Calu3 (cell line): ENCODE measurements at regions of chr22 and their contacts with region 1.

Region 1: DNA sequence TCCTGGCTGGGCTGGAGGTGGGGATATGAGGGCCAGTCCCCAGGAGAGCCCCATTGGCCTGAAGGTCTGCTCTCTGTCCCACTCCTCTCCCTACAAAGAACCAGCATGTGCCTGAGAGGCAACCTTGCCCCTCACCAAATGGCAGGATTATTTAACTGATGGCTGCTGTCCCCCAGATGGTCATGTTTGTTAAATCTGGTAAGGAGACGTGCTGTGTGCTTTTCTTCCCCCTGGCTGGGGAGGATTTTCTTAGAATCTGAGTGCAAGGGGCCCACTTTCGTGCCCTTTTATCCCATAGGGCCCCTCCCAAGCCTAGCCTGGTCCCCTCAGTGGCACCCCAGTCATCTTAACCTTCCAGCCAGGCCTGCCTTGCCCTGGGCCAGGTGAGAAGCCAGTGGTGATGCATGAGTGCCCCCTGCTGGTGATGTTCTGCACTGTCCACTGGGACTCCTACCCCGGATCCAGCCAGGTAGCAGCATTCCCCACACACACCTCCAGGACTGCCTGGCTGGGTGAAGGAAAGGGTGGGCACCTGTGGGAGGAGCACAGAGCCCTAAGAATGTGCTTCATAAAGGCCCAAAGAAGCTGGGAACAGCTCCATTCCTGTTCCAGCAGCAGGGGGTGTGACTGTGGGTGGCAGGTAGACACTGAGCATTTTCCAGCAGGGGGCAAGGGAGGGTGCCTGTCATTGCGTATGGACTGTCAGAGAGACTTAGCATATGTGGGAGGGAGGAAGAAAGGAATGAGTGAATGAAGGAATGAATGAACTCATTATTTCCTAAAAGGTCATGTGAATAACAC is 28.9 kb downstream of the MFNG start:
- DNase-seq: peak; percentile 95
- H3K4me3 Mint-ChIP-seq: no peak overlapping the region
- H3K27ac Mint-ChIP-seq: no peak overlapping the region
- H3K4me1 Mint-ChIP-seq: peaks cover 58% of the 10 kb centered on the region
- H3K27me3 Mint-ChIP-seq: no peaks in the 10 kb centered on the region
- CTCF ChIP-seq: peak; percentile 96

Region 2: DNA sequence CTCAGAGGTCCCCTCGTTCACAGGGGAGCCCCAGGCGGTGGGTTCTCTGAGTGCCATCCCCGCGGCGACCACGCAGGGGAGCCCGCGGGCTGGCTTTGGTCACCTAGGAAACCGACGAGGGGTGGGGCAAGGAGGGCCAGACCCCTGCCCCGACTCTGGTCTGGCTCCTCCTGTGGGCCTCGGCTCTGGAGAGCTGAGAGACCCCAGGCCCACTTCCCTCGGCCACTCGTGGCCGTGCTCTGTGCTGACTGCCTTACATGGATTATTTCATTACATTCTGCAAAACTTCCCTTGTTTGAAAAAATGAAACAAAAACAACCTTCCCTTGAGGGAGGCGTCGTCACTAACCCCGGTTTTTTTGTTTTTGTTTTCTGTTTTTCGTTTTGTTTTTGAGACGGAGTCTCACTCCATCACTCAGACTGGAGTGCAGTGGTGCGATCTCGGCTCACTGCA is 190.1 kb before region 1 on chr22:
- CTCF ChIA-PET with region 1: interaction called, 3 read pairs
- intact Hi-C with region 1: loop called (anchors 5 kb)
- DNase-seq: peak; percentile 80
- H3K4me3 Mint-ChIP-seq: peak overlapping the region; percentile 70
- H3K27ac Mint-ChIP-seq: peak overlapping the region; percentile 81
- H3K4me1 Mint-ChIP-seq: peaks cover 17% of the 10 kb centered on the region
- H3K27me3 Mint-ChIP-seq: peaks cover 37% of the 10 kb centered on the region
- CTCF ChIP-seq: peak; percentile 96

Region 3: GRCh38 chr22:37316875-37317371 is 140.4 kb before region 1 on chr22:
- CTCF ChIA-PET with region 1: interaction called, 63 read pairs
- intact Hi-C with region 1: loop called (anchors 1 kb)
- DNase-seq: peak; percentile 92
- H3K4me3 Mint-ChIP-seq: no peak overlapping the region
- H3K27ac Mint-ChIP-seq: no peak overlapping the region
- H3K4me1 Mint-ChIP-seq: peaks cover 50% of the 10 kb centered on the region
- H3K27me3 Mint-ChIP-seq: no peaks in the 10 kb centered on the region
- CTCF ChIP-seq: peak; percentile 95

Region 4: GRCh38 chr22:37428649-37429586 is 28.4 kb before region 1 on chr22:
- CTCF ChIA-PET with region 1: interaction called, 11 read pairs
- intact Hi-C with region 1: loop called (anchors 1 kb)
- DNase-seq: peak; percentile 65
- H3K4me3 Mint-ChIP-seq: no peak overlapping the region
- H3K27ac Mint-ChIP-seq: no peak overlapping the region
- H3K4me1 Mint-ChIP-seq: peaks cover 35% of the 10 kb centered on the region
- H3K27me3 Mint-ChIP-seq: peaks cover 51% of the 10 kb centered on the region
- CTCF ChIP-seq: peak; percentile 92

Region 5: DNA sequence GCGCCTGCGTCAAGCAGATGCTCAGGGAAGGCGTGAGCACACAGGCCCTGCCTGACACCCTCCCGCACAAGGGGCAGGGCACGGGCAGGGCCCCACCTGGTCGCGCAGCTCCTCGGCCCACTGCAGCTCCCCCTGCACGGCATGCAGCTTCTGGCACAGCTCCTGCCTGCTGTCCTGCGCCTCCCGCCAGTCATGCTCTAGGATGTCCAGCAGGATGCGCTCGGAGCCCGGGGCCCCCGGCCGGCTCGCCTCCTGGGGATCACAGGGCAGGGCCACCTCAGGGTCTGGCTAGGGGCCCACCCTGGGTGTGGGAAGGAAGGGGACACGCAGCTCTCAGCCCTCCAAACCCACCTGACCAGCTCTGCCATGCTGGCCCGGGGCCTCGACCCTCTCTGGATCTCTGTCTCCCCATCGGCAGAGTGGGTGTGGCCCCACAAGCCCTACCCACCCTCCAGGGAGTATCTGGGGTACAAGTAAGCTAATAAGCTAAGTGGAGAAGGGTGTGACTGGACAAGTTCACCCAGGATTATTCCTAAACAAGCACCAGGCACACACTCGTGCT is 51.2 kb after region 1 on chr22:
- CTCF ChIA-PET with region 1: interaction called, 12 read pairs
- intact Hi-C with region 1: no loop called
- DNase-seq: no peak
- H3K4me3 Mint-ChIP-seq: peak overlapping the region; percentile 24
- H3K27ac Mint-ChIP-seq: peak overlapping the region; percentile 75
- H3K4me1 Mint-ChIP-seq: peaks cover 56% of the 10 kb centered on the region
- H3K27me3 Mint-ChIP-seq: no peaks in the 10 kb centered on the region
- CTCF ChIP-seq: no peak